Activated naive CD4-positive, alpha-beta T cell treated with anti-CD3 and anti-CD28 coated beads for 36 hours (primary cell): ENCODE measurements at regions of chr6 and their contacts with region 1.

Region 1: DNA sequence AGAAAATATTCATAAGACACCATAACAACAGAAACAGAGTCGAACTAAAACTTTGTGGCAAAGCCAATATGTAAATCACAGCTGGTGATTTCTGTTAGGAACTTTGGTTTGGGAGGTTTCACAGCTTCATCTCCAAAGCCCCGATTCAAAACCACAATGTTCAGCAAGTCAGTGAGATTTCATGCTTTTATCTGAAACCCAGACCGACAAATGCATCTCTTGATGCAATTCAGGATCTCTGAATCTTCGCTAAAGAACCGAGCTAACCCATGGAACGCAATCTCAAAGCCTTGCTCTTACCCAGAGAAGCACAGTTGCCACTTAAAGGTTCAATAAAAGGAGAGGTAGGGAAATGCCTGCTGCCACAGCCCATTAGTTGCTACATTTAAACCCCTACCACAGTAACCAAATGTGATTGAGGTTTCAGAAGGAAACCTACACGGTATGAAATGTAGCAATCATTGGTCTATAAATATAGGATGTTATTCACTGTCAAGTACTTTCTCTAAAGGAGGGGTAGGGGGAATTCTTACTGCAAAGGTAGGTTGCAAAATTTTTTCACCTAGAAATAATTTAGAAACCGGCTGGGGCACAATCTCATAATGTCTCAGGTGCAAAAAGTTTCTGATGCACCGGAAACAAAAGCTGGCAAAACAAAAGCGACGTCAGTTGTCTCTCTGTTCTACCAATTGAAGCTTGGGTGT is 381.0 kb upstream of the ARID1B start:
- DNase-seq: peak; percentile 62
- H3K4me3 Mint-ChIP-seq: peak overlapping the region; percentile 57
- H3K27ac Mint-ChIP-seq: peak overlapping the region; percentile 77
- H3K4me1 Mint-ChIP-seq: peaks cover 82% of the 10 kb centered on the region
- H3K27me3 Mint-ChIP-seq: peaks cover 6% of the 10 kb centered on the region

Region 2: DNA sequence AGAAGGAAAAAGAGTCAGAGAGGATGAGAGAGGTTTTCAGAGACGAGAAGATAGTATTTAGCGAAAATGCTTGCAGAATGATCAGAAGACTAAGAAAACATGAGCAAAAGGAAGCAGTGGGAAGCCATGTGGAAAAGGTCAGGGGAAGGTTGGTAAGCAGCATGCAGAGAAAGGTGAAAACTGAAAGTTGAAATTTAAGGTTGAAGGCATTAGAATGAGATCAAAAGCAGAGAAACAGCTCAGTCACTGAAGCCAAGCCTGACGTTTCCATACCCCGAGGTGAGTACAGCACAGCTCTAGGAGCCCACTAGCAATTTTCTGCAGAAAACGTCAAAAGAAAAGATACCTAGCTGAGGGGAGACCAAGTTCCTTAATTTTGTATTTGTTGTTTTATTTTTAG is 1062.8 kb before region 1 on chr6:
- CTCF ChIA-PET with region 1: no interaction called
- intact Hi-C with region 1: loop called (anchors 10 kb)
- DNase-seq: peak; percentile 42
- H3K4me3 Mint-ChIP-seq: peak overlapping the region; percentile 38
- H3K27ac Mint-ChIP-seq: peak overlapping the region; percentile 86
- H3K4me1 Mint-ChIP-seq: peaks cover 58% of the 10 kb centered on the region
- H3K27me3 Mint-ChIP-seq: no peaks in the 10 kb centered on the region

Region 3: GRCh38 chr6:156174031-156174890 is 222.0 kb before region 1 on chr6:
- CTCF ChIA-PET with region 1: no interaction called
- intact Hi-C with region 1: loop called (anchors 5 kb)
- DNase-seq: peak; percentile 72
- H3K4me3 Mint-ChIP-seq: no peak overlapping the region
- H3K27ac Mint-ChIP-seq: peak overlapping the region; percentile 25
- H3K4me1 Mint-ChIP-seq: peaks cover 18% of the 10 kb centered on the region
- H3K27me3 Mint-ChIP-seq: no peaks in the 10 kb centered on the region

Region 4: DNA sequence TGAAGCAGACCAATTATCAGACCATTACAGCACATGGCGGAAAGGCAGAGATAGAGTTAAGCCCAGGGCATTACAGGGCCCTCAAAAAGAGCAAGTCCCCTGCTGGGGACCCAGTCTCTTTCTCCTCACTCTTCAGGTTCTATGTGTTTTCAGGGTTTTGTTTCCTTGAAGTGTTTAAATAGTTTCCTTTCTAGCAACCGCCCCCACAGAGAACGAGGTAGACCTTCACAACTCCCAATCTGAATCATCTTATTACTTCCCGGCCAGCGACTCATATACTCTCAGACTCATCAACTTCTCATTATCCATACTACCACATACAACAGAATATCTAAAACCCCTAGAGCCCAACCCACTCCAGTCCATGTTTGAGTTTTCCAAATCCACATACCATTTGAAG is 145.6 kb before region 1 on chr6:
- CTCF ChIA-PET with region 1: no interaction called
- intact Hi-C with region 1: loop called (anchors 1 kb)
- DNase-seq: peak; percentile 72
- H3K4me3 Mint-ChIP-seq: no peak overlapping the region
- H3K27ac Mint-ChIP-seq: peak overlapping the region; percentile 74
- H3K4me1 Mint-ChIP-seq: peaks cover 29% of the 10 kb centered on the region
- H3K27me3 Mint-ChIP-seq: no peaks in the 10 kb centered on the region

Region 5: DNA sequence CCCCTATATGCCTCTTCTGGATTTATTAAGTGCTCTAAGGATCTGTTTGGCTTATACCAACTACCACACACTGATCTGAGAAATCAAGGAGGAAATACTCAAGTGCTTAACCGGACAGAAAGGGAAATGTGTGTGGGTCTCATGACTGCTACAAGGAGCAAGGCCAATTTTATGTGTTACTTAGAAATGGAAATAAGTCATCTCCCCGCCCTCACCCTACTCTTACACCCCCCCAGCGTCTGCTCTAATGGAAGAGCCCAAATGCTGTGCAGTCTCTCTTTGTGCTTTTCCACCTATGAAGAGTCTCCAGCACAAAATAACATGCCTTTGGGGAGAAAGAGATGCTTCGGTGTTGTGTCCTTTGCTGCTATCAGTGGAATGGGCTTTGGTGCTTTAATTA is 47.8 kb before region 1 on chr6:
- CTCF ChIA-PET with region 1: no interaction called
- intact Hi-C with region 1: no loop called
- DNase-seq: no peak
- H3K4me3 Mint-ChIP-seq: no peak overlapping the region
- H3K27ac Mint-ChIP-seq: no peak overlapping the region
- H3K4me1 Mint-ChIP-seq: peaks cover 5% of the 10 kb centered on the region
- H3K27me3 Mint-ChIP-seq: no peaks in the 10 kb centered on the region

Region 6: GRCh38 chr6:157021344-157021992 is 625.2 kb after region 1 on chr6:
- CTCF ChIA-PET with region 1: no interaction called
- intact Hi-C with region 1: loop called (anchors 5 kb)
- DNase-seq: peak; percentile 90
- H3K4me3 Mint-ChIP-seq: peak overlapping the region; percentile 92
- H3K27ac Mint-ChIP-seq: peak overlapping the region; percentile 99
- H3K4me1 Mint-ChIP-seq: peaks cover 64% of the 10 kb centered on the region
- H3K27me3 Mint-ChIP-seq: no peaks in the 10 kb centered on the region

Region 7: DNA sequence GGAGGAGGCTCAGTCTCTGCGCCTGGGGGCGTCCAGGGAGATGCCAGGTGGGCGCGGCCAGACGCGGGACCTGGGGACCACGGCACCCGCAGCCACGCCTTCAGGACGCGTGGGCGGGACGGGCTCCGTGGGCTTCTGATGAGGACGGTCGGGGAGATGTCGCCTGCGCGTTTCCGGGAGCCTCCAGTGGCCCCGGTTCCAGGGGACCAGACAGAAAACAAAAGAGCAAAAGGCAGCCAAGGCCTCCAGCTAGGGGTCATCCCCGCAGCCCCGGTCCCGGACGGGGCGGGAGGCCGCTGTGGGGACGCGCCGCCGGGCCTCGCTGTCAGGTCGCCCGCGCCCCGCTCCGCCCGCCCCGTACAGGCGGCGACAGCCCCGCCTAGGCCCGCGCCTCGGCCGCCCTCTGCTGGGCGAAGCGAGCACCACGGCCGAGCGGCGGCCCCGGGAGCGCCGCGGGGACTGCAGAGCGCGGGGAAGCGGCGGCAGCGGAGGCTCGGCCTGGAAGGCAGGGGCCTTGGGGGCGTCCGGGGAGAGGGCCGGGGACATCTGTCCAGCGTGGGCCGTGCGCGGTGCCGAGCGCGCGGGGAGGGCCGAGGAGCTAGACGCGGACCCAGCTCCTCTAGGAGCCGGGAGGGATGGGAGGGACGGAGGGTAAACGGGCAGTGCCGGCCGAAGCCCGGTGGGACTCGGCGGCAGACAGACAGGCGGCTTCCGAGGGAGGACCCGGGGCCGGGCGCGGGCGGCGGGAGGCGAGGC is 878.4 kb after region 1 on chr6:
- CTCF ChIA-PET with region 1: no interaction called
- intact Hi-C with region 1: loop called (anchors 10 kb)
- DNase-seq: peak; percentile 86
- H3K4me3 Mint-ChIP-seq: peak overlapping the region; percentile 80
- H3K27ac Mint-ChIP-seq: peak overlapping the region; percentile 75
- H3K4me1 Mint-ChIP-seq: peaks cover 5% of the 10 kb centered on the region
- H3K27me3 Mint-ChIP-seq: no peaks in the 10 kb centered on the region